Mucosa of descending colon (tissue), 3 donors: ENCODE measurements at regions of chr11 and their contacts with region 1.

Region 1: DNA sequence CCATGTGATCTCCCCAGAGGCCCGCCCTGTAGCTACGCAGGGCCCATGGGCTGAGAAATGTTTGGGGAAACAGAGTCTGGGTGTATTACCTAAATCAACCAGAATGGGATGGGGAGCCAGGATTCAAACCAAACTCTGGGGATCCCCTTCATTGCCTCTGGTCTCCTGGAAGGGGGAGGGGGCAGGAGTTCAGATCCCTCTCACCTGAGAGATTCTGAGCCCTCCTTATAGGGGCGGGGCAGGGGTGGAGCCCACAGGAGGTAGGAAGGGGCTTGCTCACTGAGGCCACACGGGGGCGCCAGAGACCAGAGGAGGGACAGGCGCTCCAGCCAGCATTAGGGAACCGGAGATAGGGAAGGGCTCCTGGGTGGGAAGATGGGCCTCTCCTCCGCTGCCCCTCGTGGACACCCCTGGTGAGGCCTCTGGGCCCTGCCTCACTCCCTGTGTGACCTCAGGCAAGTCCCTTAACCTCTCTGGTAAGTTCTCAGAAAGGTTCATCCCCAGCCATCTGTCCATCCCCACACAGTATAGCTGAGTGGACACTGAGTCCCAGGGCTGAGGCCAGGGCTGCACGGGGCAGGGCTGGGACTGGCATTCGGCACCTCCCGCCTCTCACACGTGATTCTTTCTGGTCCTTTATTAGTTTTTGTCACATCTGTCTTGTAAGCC is 2.7 kb upstream of the CDC42BPG start:
- DNase-seq: peak; percentile 94 to 98 (median 95)
- ATAC-seq: peak; percentile 66
- H3K4me3 ChIP-seq: no peak overlapping the region
- H3K4me1 ChIP-seq: peaks cover 45% of the 10 kb centered on the region
- CTCF ChIP-seq: peak; percentile 94

Region 2: GRCh38 chr11:64894070-64894796 is 47.1 kb after region 1 on chr11:
- intact Hi-C with region 1: loop called (anchors 5 kb)
- DNase-seq: peak; percentile 94 to 98 (median 96)
- ATAC-seq: peak; percentile 68
- H3K4me3 ChIP-seq: no peak overlapping the region
- H3K4me1 ChIP-seq: peaks cover 8% of the 10 kb centered on the region
- CTCF ChIP-seq: peak; percentile 83